Activated naive CD4-positive, alpha-beta T cell treated with anti-CD3 and anti-CD28 coated beads for 36 hours (primary cell): ENCODE measurements at regions of chr3 and their contacts with region 1.

Region 1: DNA sequence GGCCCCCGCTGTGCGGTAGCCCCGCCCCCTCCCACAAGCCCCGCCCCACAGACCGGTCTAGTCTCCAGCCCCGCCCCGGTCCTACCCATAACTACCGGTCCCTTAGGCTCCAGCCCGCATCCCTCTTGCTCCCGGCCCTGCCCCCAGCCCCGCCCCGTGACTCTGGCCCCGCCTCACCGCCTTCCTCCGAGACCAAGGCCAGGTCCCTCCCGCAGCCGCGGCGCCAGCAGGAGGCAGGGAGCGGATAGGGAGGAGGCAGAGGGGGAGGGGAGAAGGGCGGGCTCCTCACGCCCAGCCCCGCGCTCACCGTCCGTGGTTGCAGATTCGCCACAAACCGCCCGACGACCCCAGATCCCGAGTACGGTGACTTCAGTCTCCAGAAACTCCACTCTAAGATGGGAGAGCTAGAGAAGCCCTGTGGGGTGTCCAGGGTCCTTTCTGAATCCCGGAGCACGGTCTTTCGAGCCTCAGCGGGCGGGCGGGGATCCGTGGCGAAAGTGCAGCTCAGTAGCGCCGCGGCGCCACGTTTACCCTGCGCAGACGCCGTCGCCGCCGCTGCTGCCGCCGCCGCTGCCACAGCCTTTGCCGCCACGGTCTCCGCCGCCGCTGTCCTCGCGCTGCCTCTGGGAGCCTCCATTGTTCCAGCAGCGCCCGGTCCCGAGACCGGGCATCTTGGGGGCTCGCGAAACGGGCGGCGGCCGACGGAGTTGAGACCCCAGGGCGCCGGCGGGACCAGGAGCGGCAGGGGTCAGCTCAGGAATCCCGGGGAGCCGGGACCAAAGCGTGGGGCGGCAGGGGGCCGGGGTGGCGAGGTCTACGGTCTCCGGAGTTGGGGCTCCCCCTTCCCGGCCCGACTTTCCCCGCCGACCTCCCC is at the start of gene BRPF1:
- DNase-seq: peak; percentile 100
- H3K4me3 Mint-ChIP-seq: peak within 1 kb of the TSS; percentile 84
- H3K27ac Mint-ChIP-seq: peak within 1 kb of the TSS; percentile 95
- H3K4me1 Mint-ChIP-seq: peaks cover 59% of the 10 kb centered on the region
- H3K27me3 Mint-ChIP-seq: no peaks in the 10 kb centered on the region
- total RNA-seq, gene BRPF1: 16.8 to 19.4 TPM

Region 2: GRCh38 chr3:9352917-9353752 is 378.3 kb before region 1 on chr3:
- CTCF ChIA-PET with region 1: interaction called, 4 read pairs
- intact Hi-C with region 1: loop called (anchors 1 kb)
- DNase-seq: peak; percentile 78
- H3K4me3 Mint-ChIP-seq: no peak overlapping the region
- H3K27ac Mint-ChIP-seq: peak overlapping the region; percentile 57
- H3K4me1 Mint-ChIP-seq: peaks cover 22% of the 10 kb centered on the region
- H3K27me3 Mint-ChIP-seq: no peaks in the 10 kb centered on the region

Region 3: GRCh38 chr3:9649791-9650521 is 81.5 kb before region 1 on chr3:
- CTCF ChIA-PET with region 1: interaction called, 4 read pairs
- intact Hi-C with region 1: loop called (anchors 1 kb)
- DNase-seq: no peak
- H3K4me3 Mint-ChIP-seq: peak overlapping the region; percentile 94
- H3K27ac Mint-ChIP-seq: peak overlapping the region; percentile 86
- H3K4me1 Mint-ChIP-seq: peaks cover 32% of the 10 kb centered on the region
- H3K27me3 Mint-ChIP-seq: no peaks in the 10 kb centered on the region

Region 4: DNA sequence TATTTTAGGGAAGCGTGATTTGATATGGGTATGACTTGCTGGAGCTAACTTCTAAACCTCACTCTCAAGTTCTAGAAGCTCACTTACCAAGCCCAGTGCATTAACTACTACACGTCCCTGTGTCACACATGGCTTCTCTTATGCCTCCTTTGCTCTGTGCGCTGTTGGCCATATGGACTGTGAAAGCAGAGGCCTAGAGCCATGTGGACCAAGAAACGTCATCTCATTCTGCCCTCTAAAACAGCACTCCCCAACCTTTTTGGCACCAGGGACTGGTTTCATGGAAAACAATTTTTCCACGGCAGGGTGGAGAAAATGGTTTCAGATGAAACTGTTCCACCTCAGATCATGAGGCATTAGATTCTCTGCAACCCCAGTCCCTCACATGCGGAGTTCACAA is 70.5 kb before region 1 on chr3:
- CTCF ChIA-PET with region 1: no interaction called
- intact Hi-C with region 1: no loop called
- DNase-seq: no peak
- H3K4me3 Mint-ChIP-seq: no peak overlapping the region
- H3K27ac Mint-ChIP-seq: no peak overlapping the region
- H3K4me1 Mint-ChIP-seq: peaks cover 8% of the 10 kb centered on the region
- H3K27me3 Mint-ChIP-seq: no peaks in the 10 kb centered on the region

Region 5: DNA sequence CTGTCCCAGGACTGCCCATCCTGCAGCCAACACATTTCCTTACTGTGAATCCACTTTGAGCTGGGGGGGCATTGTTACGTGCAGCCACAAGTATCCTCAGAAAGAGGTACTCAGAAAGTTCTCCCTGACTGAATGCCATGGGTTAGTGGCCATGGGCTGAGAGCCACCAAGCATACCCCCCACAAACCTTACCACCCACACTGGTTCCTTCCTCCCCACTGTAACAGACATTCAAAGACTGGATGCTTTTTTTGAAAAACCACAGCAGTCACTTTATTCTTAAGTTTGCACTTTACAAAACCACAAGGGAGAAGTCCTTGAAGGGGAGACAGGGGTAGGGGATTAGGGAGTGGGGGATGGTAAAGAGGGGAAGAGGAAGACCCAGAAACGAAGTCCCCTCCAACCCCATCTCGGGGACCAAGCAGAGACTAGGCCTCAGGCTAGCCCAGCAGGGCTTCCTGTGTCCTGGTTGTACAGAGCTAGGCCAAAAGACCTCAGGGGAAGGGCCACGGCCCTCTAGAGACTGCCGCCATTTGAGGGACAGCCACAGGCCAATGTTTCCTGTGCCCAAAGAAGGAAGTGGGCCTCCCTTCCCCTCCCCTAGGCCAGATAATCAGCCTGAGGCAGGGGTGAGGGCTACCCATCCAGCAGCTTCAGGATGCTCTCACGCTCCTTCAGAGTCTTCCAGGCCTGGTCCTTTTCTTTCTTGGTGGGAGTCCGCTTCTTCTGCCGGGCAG is 48.4 kb after region 1 on chr3:
- CTCF ChIA-PET with region 1: interaction called, 4 read pairs
- intact Hi-C with region 1: loop called (anchors 1 kb)
- DNase-seq: peak; percentile 47
- H3K4me3 Mint-ChIP-seq: no peak overlapping the region
- H3K27ac Mint-ChIP-seq: peak overlapping the region; percentile 91
- H3K4me1 Mint-ChIP-seq: peaks cover 56% of the 10 kb centered on the region
- H3K27me3 Mint-ChIP-seq: no peaks in the 10 kb centered on the region

Region 6: DNA sequence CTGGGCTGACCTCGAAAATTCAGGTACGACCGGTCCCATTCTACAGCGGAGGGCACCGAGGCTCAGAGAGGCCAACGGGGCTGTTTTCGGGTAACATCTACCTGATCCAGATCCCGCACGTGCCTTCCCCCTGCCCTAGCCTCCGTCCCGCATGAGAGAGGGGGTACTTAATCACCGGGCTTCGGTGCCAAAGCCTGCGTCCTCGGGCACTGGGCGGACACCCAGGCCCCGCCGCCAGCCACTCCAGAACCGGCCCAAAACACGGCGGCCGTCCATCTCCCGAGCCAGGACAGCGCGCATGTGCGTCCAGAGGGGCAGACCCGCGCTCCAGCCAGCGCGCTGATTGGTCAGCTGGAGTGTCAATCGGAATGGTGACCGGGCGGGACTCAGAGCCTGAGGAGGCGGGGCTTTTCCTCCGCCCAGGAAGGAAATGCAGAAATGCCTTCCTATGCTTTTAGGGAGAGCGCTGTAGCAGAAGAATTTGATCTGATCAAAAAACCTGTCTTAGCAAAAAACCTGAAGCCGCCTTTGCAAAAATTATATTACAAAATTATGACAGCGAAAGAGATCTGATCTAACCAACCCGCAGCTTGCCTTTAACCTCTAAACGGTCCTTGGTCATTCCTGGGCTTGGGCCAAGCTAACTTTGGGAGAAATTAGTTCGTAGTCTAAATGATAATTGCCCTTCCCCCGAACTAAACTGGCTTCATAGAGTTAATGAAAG is 112.4 kb after region 1 on chr3 and contains the start of gene RPUSD3:
- CTCF ChIA-PET with region 1: interaction called, 4 read pairs
- intact Hi-C with region 1: loop called (anchors 1 kb)
- DNase-seq: peak; percentile 98
- H3K4me3 Mint-ChIP-seq: peak within 1 kb of the TSS; percentile 98
- H3K27ac Mint-ChIP-seq: peak within 1 kb of the TSS; percentile 89
- H3K4me1 Mint-ChIP-seq: peaks cover 30% of the 10 kb centered on the region
- H3K27me3 Mint-ChIP-seq: no peaks in the 10 kb centered on the region
- total RNA-seq, gene RPUSD3: 82.0 to 83.7 TPM

Region 7: DNA sequence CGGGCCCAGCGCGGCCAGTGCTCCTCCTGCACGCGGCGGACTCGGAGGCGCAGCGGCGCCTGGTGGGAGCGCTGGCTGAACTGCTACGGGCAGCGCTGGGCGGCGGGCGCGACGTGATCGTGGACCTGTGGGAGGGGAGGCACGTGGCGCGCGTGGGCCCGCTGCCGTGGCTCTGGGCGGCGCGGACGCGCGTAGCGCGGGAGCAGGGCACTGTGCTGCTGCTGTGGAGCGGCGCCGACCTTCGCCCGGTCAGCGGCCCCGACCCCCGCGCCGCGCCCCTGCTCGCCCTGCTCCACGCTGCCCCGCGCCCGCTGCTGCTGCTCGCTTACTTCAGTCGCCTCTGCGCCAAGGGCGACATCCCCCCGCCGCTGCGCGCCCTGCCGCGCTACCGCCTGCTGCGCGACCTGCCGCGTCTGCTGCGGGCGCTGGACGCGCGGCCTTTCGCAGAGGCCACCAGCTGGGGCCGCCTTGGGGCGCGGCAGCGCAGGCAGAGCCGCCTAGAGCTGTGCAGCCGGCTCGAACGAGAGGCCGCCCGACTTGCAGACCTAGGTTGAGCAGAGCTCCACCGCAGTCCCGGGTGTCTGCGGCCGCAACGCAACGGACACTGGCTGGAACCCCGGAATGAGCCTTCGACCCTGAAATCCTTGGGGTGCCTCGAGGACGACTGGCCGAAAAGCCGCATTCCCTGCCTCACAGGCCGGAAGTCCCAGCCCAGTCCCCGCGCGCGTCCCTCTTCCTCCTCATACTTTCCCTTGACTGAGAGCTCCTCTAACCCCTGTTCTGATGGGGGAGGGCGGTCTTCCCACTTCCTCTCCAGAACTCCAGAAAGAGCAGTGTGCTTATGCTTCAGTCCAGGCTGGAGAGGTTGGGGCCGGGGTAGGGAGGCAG is 184.1 kb after region 1 on chr3:
- CTCF ChIA-PET with region 1: no interaction called
- intact Hi-C with region 1: no loop called
- DNase-seq: peak; percentile 47
- H3K4me3 Mint-ChIP-seq: peak overlapping the region; percentile 71
- H3K27ac Mint-ChIP-seq: no peak overlapping the region
- H3K4me1 Mint-ChIP-seq: peaks cover 13% of the 10 kb centered on the region
- H3K27me3 Mint-ChIP-seq: peaks cover 5% of the 10 kb centered on the region

Region 8: GRCh38 chr3:10322352-10322710 is 590.9 kb after region 1 on chr3:
- CTCF ChIA-PET with region 1: no interaction called
- intact Hi-C with region 1: loop called (anchors 5 kb)
- DNase-seq: peak; percentile 29
- H3K4me3 Mint-ChIP-seq: no peak overlapping the region
- H3K27ac Mint-ChIP-seq: no peak overlapping the region
- H3K4me1 Mint-ChIP-seq: peaks cover 23% of the 10 kb centered on the region
- H3K27me3 Mint-ChIP-seq: peaks cover 1% of the 10 kb centered on the region